AG04449 (cell line): ENCODE measurements at regions of chr19 and their contacts with region 1.

Region 1: DNA sequence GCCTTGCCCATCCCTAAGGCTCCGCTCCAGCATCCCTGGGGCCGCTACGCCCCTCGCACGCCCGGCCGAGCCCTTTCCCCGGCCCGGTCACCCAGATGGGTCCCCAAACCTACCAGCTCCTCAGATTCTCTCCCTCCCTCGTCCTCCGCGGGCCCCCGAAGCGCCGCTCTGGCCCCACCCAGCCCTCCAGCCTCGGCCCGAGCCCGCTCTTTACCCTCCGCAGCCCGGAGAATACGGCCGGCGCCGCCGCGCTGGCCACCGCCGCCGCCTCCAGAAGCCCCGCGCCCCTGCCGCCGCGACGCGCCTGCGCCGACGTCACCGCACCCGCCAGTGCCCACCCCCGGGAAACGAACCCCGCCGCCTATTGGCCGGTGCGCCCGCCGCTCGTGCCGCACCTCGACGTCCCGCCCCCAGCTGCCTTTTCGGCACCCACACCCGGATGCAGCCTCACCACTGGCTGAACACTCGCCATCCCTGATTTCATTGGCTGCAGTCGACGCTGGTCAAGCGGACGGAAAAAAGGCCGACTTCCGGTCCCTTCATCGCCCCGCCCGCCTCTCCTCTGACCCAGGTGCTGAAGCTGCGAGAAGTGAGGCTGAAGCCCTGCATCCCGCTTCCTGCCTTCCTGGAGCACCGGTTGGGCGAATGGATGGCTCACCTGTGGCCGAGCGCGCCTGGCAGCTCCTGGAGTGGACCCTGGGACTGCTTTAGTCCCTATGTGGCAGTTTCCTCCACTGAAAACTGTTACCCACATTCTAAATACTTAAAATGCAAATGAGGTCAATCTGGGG is at the start of gene DAPK3:
- DNase-seq: peak; percentile 85
- H3K4me3 ChIP-seq: peak within 1 kb of the TSS; percentile 97
- CTCF ChIP-seq: no peak

Region 2: DNA sequence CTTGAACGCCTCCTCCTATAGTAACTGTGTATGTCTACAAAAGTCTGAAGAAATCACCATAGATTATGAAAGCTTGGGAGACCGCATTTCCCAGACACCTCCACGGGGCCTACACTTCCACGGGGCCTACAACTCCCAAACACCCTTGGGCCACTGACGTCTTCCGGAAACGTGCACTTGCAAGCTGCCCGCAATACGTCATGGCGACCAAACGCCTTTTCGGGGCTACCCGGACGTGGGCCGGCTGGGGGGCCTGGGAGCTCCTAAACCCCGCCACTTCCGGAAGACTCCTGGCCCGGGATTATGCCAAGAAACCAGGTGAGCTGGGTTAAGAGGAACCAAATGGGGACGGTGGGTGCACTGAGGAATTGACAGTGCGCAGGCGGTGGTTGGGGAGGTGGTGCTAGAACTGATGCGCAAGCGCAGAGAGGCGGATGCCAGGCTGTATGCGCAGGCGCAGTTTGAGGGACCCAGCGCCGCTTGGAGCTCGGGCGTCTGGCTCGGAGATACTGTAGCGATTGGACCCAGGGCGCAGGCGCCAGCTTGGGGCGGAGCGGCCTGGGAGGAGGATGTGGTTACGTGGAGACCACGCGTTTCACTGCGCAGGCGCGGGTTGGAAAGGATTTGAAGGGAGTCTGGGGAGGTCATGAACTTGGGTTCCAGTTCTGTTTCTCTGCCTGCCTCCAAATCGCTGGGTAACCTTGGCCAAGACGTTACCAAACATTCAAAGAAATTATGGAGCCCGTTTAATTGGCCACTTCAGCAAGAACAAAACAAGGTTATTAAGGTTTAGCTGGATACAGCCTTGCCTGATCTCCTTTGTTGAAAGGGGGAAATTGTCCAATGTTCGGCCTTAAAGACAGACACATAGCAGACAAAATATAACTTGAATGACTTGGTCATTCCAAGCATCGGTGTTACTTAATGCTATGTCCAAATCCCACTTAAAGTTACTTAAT is 208.2 kb before region 1 on chr19 and contains the start of gene MRPL54:
- CTCF ChIA-PET with region 1: no interaction called
- POLR2A ChIA-PET with region 1: interaction called, 11 read pairs
- DNase-seq: peak; percentile 96
- H3K4me3 ChIP-seq: peak within 1 kb of the TSS; percentile 94
- CTCF ChIP-seq: no peak

Region 3: DNA sequence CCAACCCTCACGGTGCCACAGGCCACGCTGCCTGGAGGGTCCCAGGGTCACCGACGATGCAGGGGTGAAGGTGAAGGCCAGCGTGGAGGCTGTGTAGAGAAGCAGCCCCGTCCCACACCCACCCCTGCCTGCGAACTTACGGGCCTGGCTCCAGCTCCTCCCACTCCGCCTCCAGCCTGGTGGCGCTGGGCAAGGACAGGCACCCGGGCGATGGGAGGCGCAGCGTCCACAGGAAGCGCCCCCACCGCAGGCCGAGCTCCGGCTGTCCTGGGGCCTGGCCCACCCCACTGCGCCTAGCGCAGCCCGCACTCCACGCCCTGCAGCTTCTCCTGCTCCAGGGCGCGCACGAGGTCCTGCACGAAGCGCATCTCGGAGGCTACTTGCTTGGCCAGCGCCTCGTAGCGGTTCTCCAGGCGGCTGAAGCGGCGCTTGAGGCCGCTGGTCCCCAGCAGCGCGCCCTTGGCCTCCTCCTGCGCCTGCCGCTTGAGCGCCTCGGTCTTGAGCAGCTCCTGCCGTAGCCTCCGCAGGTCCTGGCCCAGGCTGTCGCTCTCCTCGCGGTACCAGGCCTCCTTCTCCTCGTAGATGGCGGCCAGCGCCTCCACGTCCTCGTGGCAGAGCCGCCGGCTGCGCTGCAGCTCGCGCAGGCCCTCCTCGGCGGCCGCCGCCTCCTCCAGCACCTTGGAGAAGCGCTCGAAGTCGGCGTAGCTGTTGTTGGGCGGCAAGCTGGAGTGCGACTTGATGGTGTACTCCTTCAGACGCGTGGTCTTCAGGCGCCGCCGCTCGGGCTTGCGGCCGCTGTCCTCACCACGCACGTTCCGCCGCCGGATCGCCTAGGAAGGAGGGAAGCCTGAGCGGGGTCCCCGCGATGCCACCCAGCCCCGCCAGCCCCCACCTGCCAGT is 11.9 kb before region 1 on chr19:
- CTCF ChIA-PET with region 1: interaction called, 10 read pairs
- POLR2A ChIA-PET with region 1: interaction called, 17 read pairs
- DNase-seq: no peak
- H3K4me3 ChIP-seq: no peak overlapping the region
- CTCF ChIP-seq: no peak